ENCODE measurements at regions of chr1 and their contacts with region 1.

Region 1: DNA sequence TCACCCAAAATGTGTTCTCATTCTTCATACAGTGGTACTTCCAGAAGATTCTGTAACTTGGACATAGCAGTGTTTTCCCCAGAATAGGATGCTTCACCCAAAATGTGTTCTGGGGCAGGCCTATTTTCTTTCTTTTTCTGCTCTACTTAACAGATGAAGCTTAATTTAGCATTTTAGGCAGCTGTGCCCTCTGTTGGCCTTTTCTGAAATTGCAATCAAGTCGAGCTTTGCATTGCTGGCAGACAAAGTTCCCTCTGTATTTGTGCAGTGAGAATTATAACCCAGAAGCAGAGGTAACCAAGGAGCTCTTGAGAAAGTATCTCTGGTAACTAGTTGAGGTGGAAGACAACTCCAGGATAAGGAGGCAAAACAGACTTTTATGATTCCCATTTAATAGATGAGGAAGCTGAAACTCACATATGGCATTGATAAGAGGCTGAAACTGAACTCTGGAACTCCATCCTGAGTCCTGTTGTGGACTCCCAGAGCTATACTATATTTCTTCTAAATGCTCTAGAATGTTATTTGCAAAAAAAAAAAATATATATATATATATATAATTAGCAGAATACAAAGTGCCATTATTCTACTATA is 50.3 kb upstream of the L1TD1 start:
- DNase-seq: peak; percentile 59
- H3K4me3 ChIP-seq: no peak overlapping the region
- H3K27ac ChIP-seq: no peak overlapping the region
- H3K4me1 ChIP-seq: no peaks in the 10 kb centered on the region
- H3K27me3 ChIP-seq: no peaks in the 10 kb centered on the region
- CTCF ChIP-seq: peak; percentile 53 to 70
- POLR2A ChIP-seq: no peak

Region 2: GRCh38 chr1:62154687-62155086 is 10.4 kb after region 1 on chr1:
- CTCF ChIA-PET with region 1: interaction called, 11 read pairs
- POLR2A ChIA-PET with region 1: no interaction called
- dilution Hi-C with region 1: no loop called
- intact Hi-C with region 1: no loop called
- DNase-seq: no peak
- H3K4me3 ChIP-seq: no peak overlapping the region
- H3K27ac ChIP-seq: no peak overlapping the region
- H3K4me1 ChIP-seq: no peaks in the 10 kb centered on the region
- H3K27me3 ChIP-seq: no peaks in the 10 kb centered on the region
- CTCF ChIP-seq: no peak
- POLR2A ChIP-seq: no peak

Region 3: DNA sequence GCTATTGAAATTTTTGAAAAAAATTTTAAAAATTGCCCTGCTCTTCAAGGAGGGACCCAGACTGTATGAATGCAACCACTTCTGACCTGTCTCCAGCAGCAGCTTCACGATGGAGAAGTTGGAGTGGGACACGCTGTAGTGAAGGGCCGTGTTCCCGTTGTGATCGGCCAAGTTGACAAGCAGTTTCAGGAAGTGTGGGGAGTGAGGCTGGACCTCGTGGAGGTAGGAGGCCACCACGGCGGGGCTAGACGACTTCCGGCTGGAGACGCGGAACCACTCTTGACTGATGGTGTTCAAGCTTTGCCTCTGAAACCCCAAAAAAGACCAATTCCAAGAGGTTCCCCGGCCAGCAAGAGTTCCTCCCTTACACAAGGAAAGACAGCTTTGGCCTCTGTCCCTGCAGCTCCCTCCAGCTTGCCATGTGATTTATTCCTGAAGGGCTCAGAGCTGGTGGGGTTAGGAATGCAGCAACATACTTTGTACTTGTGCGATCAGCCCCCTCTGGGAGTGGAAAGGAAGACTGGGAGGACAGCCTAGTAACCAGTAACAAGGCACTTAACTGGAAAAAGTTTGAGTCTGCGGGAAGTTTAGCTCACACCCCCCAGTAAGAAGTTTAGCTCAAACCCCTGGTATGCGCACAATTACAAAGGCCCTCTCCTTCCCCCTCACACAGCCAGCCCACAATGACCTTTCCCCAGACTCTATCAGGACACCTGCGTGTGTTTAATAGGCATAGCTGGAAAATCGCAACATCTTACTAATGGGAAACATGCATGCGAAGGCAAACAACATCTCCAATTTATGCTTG is 118.9 kb after region 1 on chr1:
- CTCF ChIA-PET with region 1: no interaction called
- POLR2A ChIA-PET with region 1: no interaction called
- dilution Hi-C with region 1: no loop called
- intact Hi-C with region 1: no loop called
- DNase-seq: no peak
- H3K4me3 ChIP-seq: no peak overlapping the region
- H3K27ac ChIP-seq: no peak overlapping the region
- H3K4me1 ChIP-seq: no peaks in the 10 kb centered on the region
- H3K27me3 ChIP-seq: no peaks in the 10 kb centered on the region
- CTCF ChIP-seq: no peak
- POLR2A ChIP-seq: no peak

Measured in endothelial cell of umbilical vein (primary cell).